Activated T-helper 2 cell treated with anti-CD3 and anti-CD28 coated beads, Interferon-gamma antibody, Interleukin-2, Interleukin-4, amounts not matched to agents 10 μg/mL and 5 μg/mL and 100 μg/mL, durations not matched to agents 14 hours and 24 hours and 36 hours (primary cell): ENCODE measurements at regions of chr4 and their contacts with region 1.

Region 1: GRCh38 chr4:165131247-165131832 is 18.7 kb upstream of the TMEM192 start:
- DNase-seq: peak; percentile 59
- H3K4me3 Mint-ChIP-seq: no peak overlapping the region
- H3K27ac Mint-ChIP-seq: no peak overlapping the region
- H3K4me1 Mint-ChIP-seq: peaks cover 12% of the 10 kb centered on the region
- H3K27me3 Mint-ChIP-seq: peaks cover 21% of the 10 kb centered on the region

Region 2: DNA sequence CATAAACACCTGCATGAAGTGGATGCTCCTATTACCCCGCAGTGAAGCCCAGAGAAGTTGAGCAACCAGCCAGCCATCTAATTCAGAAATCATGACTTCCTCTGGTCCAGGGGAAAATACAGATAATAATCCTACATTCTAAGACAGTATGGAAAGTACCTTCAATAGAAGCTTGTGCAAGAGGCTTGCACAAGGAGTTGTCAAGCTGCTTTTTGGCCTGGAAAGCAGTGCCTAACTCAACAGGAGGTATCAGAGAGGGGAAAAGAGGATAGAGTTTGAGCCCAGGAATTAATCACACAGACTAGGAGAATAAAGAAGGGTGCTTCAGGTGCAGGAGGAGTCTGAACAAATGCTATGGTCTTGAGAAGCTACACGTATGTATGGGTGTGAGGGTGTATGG is 45.4 kb before region 1 on chr4:
- intact Hi-C with region 1: no loop called
- DNase-seq: no peak
- H3K4me3 Mint-ChIP-seq: no peak overlapping the region
- H3K27ac Mint-ChIP-seq: no peak overlapping the region
- H3K4me1 Mint-ChIP-seq: no peaks in the 10 kb centered on the region
- H3K27me3 Mint-ChIP-seq: no peaks in the 10 kb centered on the region

Region 3: GRCh38 chr4:165207431-165208220 is 76.3 kb after region 1 on chr4 and contains the start of gene KLHL2:
- intact Hi-C with region 1: loop called (anchors 5 kb)
- DNase-seq: peak; percentile 72
- H3K4me3 Mint-ChIP-seq: peak within 1 kb of the TSS; percentile 88
- H3K27ac Mint-ChIP-seq: peak within 1 kb of the TSS; percentile 80
- H3K4me1 Mint-ChIP-seq: peaks cover 68% of the 10 kb centered on the region
- H3K27me3 Mint-ChIP-seq: no peaks in the 10 kb centered on the region
- total RNA-seq, gene KLHL2: 30.3 and 32.3 TPM in 2 replicates

Region 4: DNA sequence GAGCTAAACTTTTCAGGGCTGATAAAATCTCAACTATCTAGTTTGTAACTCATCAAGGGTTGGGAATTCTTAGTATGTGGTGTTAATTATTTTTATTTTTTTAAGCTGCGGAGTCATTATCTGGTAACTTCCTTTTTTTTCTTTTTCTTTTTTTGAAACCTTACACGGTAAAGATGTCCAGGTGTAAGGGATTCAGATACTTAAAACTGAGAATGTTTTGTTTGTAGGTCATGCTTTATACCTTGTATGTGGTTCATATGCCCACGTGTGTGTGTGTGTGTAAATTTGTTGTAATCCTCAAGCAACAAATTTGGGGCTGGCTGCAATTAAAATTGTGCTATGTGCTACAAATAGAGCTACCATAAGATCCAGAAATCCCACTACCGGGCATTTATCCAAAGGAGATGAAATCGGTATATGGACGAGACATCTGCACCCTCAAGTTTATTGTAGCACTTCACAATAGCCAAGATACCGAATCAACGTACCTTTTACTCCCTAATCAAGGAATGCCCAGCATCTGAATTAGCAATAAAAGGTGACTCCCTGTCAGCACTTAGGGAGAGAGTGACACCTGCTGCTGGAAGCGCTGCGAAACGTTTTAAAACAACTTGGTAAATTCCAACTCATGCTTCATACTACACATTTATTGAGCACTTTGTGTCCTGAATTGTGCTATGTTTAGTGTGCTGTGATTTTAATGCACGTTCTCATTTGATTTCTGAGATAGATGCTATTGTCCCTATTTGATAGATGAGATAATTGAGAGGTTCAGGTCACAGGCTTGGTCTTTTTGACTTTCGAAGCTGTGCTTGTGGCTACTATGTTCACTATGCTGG is 212.2 kb after region 1 on chr4:
- intact Hi-C with region 1: loop called (anchors 2 kb)
- DNase-seq: no peak
- H3K4me3 Mint-ChIP-seq: no peak overlapping the region
- H3K27ac Mint-ChIP-seq: no peak overlapping the region
- H3K4me1 Mint-ChIP-seq: peaks cover 3% of the 10 kb centered on the region
- H3K27me3 Mint-ChIP-seq: peaks cover 3% of the 10 kb centered on the region

Region 5: GRCh38 chr4:165684177-165684805 is 553.0 kb after region 1 on chr4:
- intact Hi-C with region 1: no loop called
- DNase-seq: no peak
- H3K4me3 Mint-ChIP-seq: no peak overlapping the region
- H3K27ac Mint-ChIP-seq: no peak overlapping the region
- H3K4me1 Mint-ChIP-seq: no peaks in the 10 kb centered on the region
- H3K27me3 Mint-ChIP-seq: no peaks in the 10 kb centered on the region